ENCODE measurements at regions of chr15 and their contacts with region 1.

Region 1: DNA sequence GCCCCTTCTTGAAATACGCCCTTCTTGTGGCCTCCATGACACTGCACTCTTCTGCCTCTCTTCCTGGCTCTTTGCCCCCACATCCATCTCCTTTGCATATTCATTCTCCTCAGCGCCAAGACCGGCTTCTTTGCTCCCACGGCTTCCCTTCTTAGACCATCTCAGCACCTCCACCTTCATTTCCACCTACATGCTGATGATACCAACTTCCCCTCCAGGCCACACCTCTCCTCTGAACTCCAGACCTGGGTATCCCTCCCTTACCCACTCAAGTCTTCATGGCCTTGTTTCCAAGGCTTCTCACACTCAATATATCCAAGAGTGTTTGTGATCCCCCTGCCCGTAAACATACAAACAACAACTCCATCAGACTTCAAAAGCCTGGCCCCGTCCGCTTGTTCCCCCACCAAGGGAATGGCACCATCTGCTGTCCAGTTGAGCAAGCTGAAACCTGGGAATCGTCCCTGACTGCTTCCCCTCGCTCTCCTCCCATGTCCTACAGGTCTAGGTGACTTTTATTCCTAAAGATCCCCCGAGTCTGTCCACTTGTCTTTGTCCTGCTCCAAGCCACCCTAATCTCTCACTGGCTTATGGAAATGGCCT is 27.8 kb upstream of the FAM174B start:
- DNase-seq: peak in 7 of 10 donors; percentile 27 to 64 (median 54)
- H3K4me3 ChIP-seq: no peak overlapping the region
- H3K27ac ChIP-seq: no peak overlapping the region
- H3K27me3 ChIP-seq: no peaks in the 10 kb centered on the region
- CTCF ChIP-seq: peak in 55 of 56 donors; percentile 24 to 90 (median 67)

Region 2: DNA sequence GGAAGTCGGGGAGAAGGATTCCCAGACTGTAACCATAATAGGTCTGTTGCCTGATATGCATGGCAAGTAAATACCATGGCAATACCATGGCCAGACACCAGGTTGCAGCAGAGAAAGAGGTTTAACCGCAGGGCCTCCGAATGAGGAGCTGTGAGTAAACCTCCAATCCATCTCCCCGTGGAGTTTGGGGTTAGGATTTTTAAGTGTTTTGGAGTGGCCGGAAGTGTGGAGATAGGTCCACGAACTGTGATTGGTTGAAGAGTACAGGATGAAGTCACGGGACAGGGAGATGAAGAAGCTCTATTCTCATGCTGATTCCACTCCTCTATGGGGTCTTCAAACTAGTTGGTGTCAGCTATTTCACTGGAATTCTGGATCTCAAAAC is 161.7 kb before region 1 on chr15:
- intact Hi-C with region 1: loop called (anchors 1 to 5 kb)
- DNase-seq: peak; percentile 31 to 89 (median 76)
- H3K4me3 ChIP-seq: no peak overlapping the region
- H3K27ac ChIP-seq: no peak overlapping the region
- H3K27me3 ChIP-seq: no peaks in the 10 kb centered on the region
- CTCF ChIP-seq: peak; percentile 48 to 92 (median 82)

Region 3: DNA sequence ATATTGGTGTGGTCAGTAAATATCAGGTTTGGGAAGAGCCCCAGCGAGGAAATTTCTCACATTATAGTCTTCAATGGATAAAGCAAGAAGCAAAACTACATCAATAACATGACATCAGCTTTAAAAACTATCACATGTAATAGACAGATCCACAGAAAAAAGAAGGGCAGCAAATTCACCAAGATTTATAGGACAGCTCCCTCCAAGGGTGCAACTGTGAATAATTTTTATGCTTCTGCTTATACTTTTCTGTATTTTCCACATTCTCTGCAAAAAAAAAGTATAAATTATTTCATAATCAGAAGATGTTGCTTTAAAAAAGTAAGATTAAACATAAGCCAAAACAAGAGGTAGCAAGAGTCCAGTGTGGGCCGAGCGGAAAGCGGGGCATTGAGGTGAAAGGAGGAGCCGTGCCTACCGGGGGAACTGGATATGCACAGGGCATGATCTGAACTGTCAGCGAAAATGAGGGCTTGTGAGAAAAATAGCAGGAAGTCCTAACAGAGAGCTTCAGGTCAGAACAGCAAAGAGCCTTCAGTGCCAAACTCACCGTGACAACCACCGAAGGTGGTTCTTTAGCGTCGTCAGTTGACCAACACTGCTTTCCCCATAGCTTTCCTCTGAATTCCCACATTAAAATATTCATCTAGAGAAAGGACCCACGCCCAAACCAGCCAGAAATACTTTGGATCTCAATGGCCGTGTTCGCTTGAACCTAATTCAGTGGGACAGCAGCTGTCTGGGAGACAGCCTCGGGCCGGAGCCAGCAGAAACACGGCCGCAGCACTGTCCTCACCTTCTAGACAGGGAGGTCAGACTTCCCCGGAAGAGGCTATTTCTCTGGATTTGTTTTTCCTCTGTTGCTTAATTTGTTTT is 87.6 kb before region 1 on chr15:
- intact Hi-C with region 1: no loop called
- DNase-seq: no peak
- H3K4me3 ChIP-seq: no peak overlapping the region
- H3K27ac ChIP-seq: no peak overlapping the region
- H3K27me3 ChIP-seq: no peaks in the 10 kb centered on the region
- CTCF ChIP-seq: peak in 6 of 56 donors; percentile 9 to 38 (median 15)

Region 4: GRCh38 chr15:92611993-92612745 is 71.2 kb before region 1 on chr15:
- intact Hi-C with region 1: loop called (anchors 2 kb)
- DNase-seq: peak in 6 of 10 donors; percentile 36 to 76 (median 52)
- H3K4me3 ChIP-seq: no peak overlapping the region
- H3K27ac ChIP-seq: peak overlapping the region in 33 of 59 donors; percentile 2 to 64 (median 19)
- H3K27me3 ChIP-seq: no peaks in the 10 kb centered on the region
- CTCF ChIP-seq: peak in 43 of 56 donors; percentile 7 to 71 (median 36)

Measured in dorsolateral prefrontal cortex (tissue), 120 donors.